Posterior cingulate gyrus (tissue), 11 donors: ENCODE measurements at regions of chr12 and their contacts with region 1.

Region 1: GRCh38 chr12:122793685-122794106 is 19.3 kb downstream of the CCDC62 start:
- DNase-seq: peak in 1 of 10 donors; percentile 10

Region 2: GRCh38 chr12:122860346-122861090 is 66.8 kb after region 1 on chr12:
- intact Hi-C with region 1: loop called (anchors 10 kb)
- DNase-seq: peak; percentile 80 to 98 (median 91)

Region 3: DNA sequence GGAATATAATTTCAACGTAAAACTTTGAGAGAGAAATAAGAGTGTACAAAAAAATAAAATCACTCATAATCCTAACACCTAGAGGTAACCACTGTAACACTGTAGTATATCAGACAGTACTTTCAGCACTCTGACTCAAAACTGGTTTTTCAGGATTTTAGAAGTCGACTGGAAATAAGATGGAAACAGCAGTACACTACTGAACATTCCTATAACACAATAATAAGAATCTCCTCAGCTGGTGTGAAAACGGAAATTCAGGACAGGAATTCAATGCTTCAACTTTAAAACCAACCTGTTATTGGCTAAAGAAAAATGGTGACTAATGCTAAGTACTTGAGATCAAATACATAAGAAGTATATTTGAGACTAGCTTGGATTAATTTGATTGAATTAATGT is 369.5 kb after region 1 on chr12:
- intact Hi-C with region 1: no loop called
- DNase-seq: no peak